CD14-positive monocyte (primary cell): ENCODE measurements at regions of chr14 and their contacts with region 1.

Region 1: DNA sequence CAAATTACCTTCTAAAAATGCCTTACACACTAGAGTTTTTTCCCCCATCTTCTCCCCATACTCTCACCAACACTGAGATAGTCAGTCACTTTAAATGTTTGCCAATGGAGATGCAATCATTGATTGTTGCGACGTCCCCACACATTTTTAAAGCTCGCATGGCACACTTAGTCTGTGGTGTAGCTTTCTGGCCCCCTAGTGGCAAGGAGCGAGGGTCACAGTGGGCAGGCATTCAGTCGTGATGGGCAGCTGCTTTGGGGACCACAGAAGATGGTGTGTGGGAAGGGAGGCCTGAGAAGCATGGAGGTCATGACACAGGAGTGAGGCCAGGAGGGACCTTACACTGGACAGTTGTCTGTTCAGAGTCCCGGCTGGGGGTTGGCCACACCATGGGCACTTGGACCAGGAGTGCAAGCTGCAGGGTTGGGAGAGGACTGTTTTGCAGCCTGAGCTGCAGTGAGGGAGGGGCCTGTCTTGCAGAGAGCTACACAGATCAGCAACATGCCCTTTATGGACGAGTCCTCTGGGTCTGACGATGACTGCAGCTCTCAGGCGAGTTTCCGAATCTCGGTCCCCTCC is 28.7 kb downstream of the PIGH start:
- DNase-seq: peak; percentile 36 to 50 (median 46)
- H3K4me3 ChIP-seq: no peak overlapping the region
- H3K4me3 Mint-ChIP-seq: no peak overlapping the region
- H3K27ac ChIP-seq: no peak overlapping the region
- H3K27ac Mint-ChIP-seq: peak overlapping the region in 1 of 7 donors; percentile 37
- H3K4me1 ChIP-seq: no peaks in the 10 kb centered on the region
- H3K4me1 Mint-ChIP-seq: peaks cover 7% of the 10 kb centered on the region
- H3K27me3 ChIP-seq: no peaks in the 10 kb centered on the region
- H3K27me3 Mint-ChIP-seq: peaks cover 11 to 13% (median 11%) of the 10 kb centered on the region in 3 donors
- CTCF ChIP-seq: peak; percentile 81

Region 2: DNA sequence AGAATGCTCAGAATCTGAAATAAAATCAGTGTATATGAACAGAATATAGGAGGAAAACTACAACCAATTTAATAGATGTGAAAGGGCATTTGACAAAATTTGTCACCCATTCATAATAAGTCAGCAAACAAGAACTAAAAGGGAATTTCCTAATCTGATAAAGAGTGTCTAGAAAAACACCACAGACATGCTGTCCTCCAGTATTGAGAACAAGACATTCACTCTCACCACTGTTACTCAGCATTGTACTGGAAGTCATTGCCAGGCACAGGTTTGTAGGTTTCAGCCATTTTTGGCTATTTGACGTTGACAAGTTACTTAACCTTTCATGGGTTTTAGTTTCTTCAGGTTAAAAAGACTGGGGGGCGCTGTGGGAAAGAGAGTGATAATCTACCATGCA is 198.0 kb before region 1 on chr14:
- intact Hi-C with region 1: no loop called
- DNase-seq: no peak
- H3K4me3 ChIP-seq: no peak overlapping the region
- H3K4me3 Mint-ChIP-seq: no peak overlapping the region
- H3K27ac ChIP-seq: no peak overlapping the region
- H3K27ac Mint-ChIP-seq: peak overlapping the region in 1 of 7 donors; percentile 21
- H3K4me1 ChIP-seq: no peaks in the 10 kb centered on the region
- H3K4me1 Mint-ChIP-seq: no peaks in the 10 kb centered on the region
- H3K27me3 ChIP-seq: no peaks in the 10 kb centered on the region
- H3K27me3 Mint-ChIP-seq: peaks cover 0 to 1% (median 0%) of the 10 kb centered on the region in 3 donors
- CTCF ChIP-seq: no peak

Region 3: DNA sequence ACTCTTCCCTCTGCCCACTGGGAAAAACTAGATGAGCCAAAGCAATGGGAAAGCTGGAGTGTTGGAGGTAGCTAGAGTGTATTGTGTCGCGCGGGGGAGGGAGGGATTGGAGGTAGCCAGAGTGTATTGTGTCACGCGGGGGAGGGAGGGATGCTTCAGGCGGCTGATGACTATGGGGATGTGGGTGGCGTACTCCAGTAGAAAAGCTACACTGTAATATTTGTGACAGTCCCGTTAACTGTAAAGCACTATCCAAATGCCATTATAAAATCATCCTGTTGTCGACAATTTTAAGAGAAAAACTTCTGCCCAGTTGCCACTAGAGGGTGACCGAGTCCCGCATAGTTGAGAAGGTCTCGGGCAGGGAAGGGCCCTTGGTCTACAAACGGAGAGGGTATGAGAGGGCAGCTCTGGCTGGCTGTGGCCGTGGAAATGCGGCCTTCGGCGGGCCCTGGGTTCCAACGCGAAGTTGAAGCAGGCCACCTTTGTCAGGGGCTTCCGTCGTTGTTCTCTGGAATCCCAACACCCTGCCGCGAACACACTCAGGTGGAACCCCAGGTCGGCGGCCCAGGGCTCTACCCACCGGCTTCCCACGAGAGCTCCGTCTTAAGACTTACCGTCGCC is 144.3 kb before region 1 on chr14:
- intact Hi-C with region 1: loop called (anchors 1 to 5 kb)
- DNase-seq: peak; percentile 54 to 63 (median 56)
- H3K4me3 ChIP-seq: no peak overlapping the region
- H3K4me3 Mint-ChIP-seq: no peak overlapping the region
- H3K27ac ChIP-seq: no peak overlapping the region
- H3K27ac Mint-ChIP-seq: peak overlapping the region in 1 of 7 donors; percentile 66
- H3K4me1 ChIP-seq: peaks cover 5 to 9% of the 10 kb centered on the region in 2 donors
- H3K4me1 Mint-ChIP-seq: peaks cover 14% of the 10 kb centered on the region
- H3K27me3 ChIP-seq: peaks cover 6 to 15% of the 10 kb centered on the region in 2 donors
- H3K27me3 Mint-ChIP-seq: peaks cover 20 to 44% (median 31%) of the 10 kb centered on the region in 3 donors
- CTCF ChIP-seq: peak; percentile 86

Region 4: GRCh38 chr14:67610491-67610890 is 39.1 kb after region 1 on chr14:
- intact Hi-C with region 1: no loop called
- DNase-seq: no peak
- H3K4me3 ChIP-seq: no peak overlapping the region
- H3K4me3 Mint-ChIP-seq: no peak overlapping the region
- H3K27ac ChIP-seq: no peak overlapping the region
- H3K27ac Mint-ChIP-seq: no peak overlapping the region
- H3K4me1 ChIP-seq: no peaks in the 10 kb centered on the region
- H3K4me1 Mint-ChIP-seq: no peaks in the 10 kb centered on the region
- H3K27me3 ChIP-seq: no peaks in the 10 kb centered on the region
- H3K27me3 Mint-ChIP-seq: peaks cover 3 to 6% (median 6%) of the 10 kb centered on the region in 3 donors
- CTCF ChIP-seq: no peak

Region 5: DNA sequence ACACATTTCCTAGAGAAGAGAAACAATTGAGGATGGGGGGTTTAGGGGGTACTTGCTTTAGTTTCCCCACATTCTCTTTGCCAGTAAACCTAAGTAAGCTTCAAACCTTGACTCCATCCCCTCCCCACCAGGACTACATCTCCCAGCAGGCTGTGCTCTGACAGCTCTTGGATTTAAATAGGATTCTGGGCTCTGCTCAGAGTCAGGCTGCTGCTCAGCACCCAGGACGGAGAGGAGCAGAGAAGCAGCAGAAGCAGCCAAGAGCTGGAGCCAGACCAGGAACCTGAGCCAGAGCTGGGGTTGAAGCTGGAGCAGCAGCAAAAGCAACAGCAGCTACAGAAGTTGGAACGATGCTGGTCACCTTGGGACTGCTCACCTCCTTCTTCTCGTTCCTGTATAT is 150.9 kb after region 1 on chr14:
- intact Hi-C with region 1: no loop called
- DNase-seq: no peak
- H3K4me3 ChIP-seq: no peak overlapping the region
- H3K4me3 Mint-ChIP-seq: peak overlapping the region in 1 of 2 donors; percentile 56
- H3K27ac ChIP-seq: no peak overlapping the region
- H3K27ac Mint-ChIP-seq: no peak overlapping the region
- H3K4me1 ChIP-seq: peaks cover 4 to 5% of the 10 kb centered on the region in 2 donors
- H3K4me1 Mint-ChIP-seq: peaks cover 10% of the 10 kb centered on the region
- H3K27me3 ChIP-seq: peaks cover 10 to 18% of the 10 kb centered on the region in 2 donors
- H3K27me3 Mint-ChIP-seq: peaks cover 12 to 31% (median 14%) of the 10 kb centered on the region in 3 donors
- CTCF ChIP-seq: no peak

Region 6: GRCh38 chr14:67863234-67863633 is 291.9 kb after region 1 on chr14:
- intact Hi-C with region 1: no loop called
- DNase-seq: no peak
- H3K4me3 ChIP-seq: no peak overlapping the region
- H3K4me3 Mint-ChIP-seq: no peak overlapping the region
- H3K27ac ChIP-seq: no peak overlapping the region
- H3K27ac Mint-ChIP-seq: no peak overlapping the region
- H3K4me1 ChIP-seq: no peaks in the 10 kb centered on the region
- H3K4me1 Mint-ChIP-seq: peaks cover 4% of the 10 kb centered on the region
- H3K27me3 ChIP-seq: no peaks in the 10 kb centered on the region
- H3K27me3 Mint-ChIP-seq: peaks cover 0 to 4% (median 0%) of the 10 kb centered on the region in 3 donors
- CTCF ChIP-seq: no peak